Activated CD4-positive, alpha-beta T cell treated with anti-CD3 and anti-CD28 coated beads for 36 hours (primary cell): ENCODE measurements at regions of chr20 and their contacts with region 1.

Region 1: DNA sequence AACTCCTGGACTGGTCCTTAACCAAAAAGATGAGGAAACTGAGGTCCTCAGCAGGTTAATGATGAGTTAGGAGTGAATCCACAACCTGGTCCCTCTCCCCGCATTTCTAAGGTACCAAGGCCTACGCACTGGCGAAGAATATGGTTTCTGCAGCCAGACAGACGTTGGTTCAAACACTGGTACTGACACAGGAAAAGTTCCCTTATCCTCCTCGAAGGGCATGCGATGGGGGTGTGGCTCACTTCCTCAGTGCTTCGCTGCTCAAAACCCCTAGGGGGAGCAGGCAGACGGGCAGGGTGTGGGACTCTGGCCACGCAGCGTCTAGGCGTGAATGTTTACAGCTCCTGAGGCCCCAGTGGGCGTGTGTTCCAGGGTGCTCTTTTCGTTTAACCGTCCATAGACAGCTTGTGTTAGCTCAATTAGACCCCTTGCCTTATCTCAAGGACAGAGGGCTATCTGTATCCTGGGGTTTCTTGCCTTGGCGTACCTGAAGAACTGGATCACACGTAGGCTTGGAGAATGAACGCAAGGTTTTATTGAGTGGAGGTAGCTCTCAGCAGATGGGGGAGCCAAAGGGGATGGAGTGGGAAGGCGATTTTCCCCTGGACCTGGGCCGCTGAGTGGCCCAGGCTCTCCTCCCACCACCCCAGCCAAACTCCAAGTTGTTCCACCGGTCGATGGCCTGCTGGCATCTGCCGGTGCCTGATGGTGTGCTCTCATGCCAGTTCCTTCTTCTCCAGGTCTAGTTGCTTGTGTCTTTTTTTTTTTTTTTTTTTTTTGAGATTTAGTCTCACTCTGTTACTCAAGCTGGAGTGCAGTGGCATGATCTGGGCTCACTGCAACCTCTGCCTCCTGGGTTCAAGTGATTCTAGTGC is 31.8 kb upstream of the PTPN1 start:
- DNase-seq: peak; percentile 89
- ATAC-seq: peak; percentile 99
- H3K4me3 Mint-ChIP-seq: no peak overlapping the region
- H3K27ac Mint-ChIP-seq: peak overlapping the region; percentile 13
- H3K4me1 Mint-ChIP-seq: peaks cover 32% of the 10 kb centered on the region
- H3K27me3 Mint-ChIP-seq: no peaks in the 10 kb centered on the region

Region 2: GRCh38 chr20:48502850-48503815 is 1975.3 kb before region 1 on chr20:
- CTCF ChIA-PET with region 1: no interaction called
- POLR2A ChIA-PET with region 1: no interaction called
- intact Hi-C with region 1: no loop called
- DNase-seq: no peak
- ATAC-seq: no peak
- H3K4me3 Mint-ChIP-seq: no peak overlapping the region
- H3K27ac Mint-ChIP-seq: no peak overlapping the region
- H3K4me1 Mint-ChIP-seq: no peaks in the 10 kb centered on the region
- H3K27me3 Mint-ChIP-seq: no peaks in the 10 kb centered on the region

Region 3: GRCh38 chr20:50165684-50166554 is 312.5 kb before region 1 on chr20:
- CTCF ChIA-PET with region 1: no interaction called
- POLR2A ChIA-PET with region 1: no interaction called
- intact Hi-C with region 1: no loop called
- DNase-seq: peak; percentile 95
- ATAC-seq: peak; percentile 100
- H3K4me3 Mint-ChIP-seq: peak overlapping the region; percentile 58
- H3K27ac Mint-ChIP-seq: peak overlapping the region; percentile 72
- H3K4me1 Mint-ChIP-seq: peaks cover 13% of the 10 kb centered on the region
- H3K27me3 Mint-ChIP-seq: peaks cover 5% of the 10 kb centered on the region

Region 4: GRCh38 chr20:50455656-50456470 is 22.5 kb before region 1 on chr20:
- CTCF ChIA-PET with region 1: no interaction called
- POLR2A ChIA-PET with region 1: no interaction called
- intact Hi-C with region 1: no loop called
- DNase-seq: no peak
- ATAC-seq: no peak
- H3K4me3 Mint-ChIP-seq: no peak overlapping the region
- H3K27ac Mint-ChIP-seq: no peak overlapping the region
- H3K4me1 Mint-ChIP-seq: peaks cover 7% of the 10 kb centered on the region
- H3K27me3 Mint-ChIP-seq: peaks cover 20% of the 10 kb centered on the region

Region 5: GRCh38 chr20:50569864-50570836 is 91.8 kb after region 1 on chr20:
- CTCF ChIA-PET with region 1: interaction called, 28 read pairs
- POLR2A ChIA-PET with region 1: no interaction called
- intact Hi-C with region 1: loop called (anchors 1 to 2 kb)
- DNase-seq: peak; percentile 77
- ATAC-seq: peak; percentile 92
- H3K4me3 Mint-ChIP-seq: no peak overlapping the region
- H3K27ac Mint-ChIP-seq: peak overlapping the region; percentile 77
- H3K4me1 Mint-ChIP-seq: peaks cover 82% of the 10 kb centered on the region
- H3K27me3 Mint-ChIP-seq: no peaks in the 10 kb centered on the region

Region 6: DNA sequence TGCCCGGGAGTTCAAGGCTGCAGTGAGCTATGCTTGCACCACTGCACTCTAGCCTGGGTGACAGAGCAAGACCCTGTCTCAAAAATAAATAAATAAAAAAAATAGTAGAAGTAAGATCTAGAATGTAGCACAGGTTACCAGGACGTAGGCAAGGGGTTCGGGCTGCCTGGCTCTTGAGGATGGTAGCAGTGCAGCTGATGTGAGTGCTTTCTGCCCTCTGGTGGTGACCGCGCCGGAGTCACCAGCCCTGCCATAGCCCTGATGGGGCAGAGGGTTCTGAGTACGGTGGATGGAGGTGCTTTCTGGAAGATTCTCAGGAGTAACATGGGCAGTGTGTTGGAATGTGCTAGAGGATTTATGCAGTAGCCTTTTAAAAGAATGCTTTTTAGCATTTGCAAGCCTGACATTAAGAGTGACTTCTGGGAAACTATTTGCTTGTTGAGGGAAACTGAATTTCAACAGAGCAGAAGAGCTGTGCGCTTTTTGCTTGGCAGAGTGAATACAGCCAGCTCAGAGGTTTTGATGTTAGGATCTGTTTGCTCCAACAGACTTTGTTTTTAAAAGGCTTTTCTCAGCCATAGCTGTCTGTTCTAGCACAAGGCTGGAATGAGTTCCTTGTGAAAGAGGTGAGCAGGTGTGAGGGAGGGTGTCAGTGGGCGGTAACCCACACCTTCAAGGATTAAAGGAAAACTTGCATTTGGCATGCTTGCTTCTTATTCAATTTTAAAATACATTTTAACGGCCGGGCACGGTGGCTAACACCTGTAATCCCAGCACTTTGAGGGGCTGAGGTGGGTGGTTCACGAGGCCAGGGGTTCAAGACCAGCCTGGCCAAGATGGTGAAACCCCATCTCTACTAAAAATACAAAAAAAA is 97.7 kb after region 1 on chr20:
- CTCF ChIA-PET with region 1: interaction called, 28 read pairs
- POLR2A ChIA-PET with region 1: no interaction called
- intact Hi-C with region 1: loop called (anchors 1 kb)
- DNase-seq: peak; percentile 83
- ATAC-seq: peak; percentile 89
- H3K4me3 Mint-ChIP-seq: no peak overlapping the region
- H3K27ac Mint-ChIP-seq: peak overlapping the region; percentile 16
- H3K4me1 Mint-ChIP-seq: peaks cover 44% of the 10 kb centered on the region
- H3K27me3 Mint-ChIP-seq: no peaks in the 10 kb centered on the region

Region 7: DNA sequence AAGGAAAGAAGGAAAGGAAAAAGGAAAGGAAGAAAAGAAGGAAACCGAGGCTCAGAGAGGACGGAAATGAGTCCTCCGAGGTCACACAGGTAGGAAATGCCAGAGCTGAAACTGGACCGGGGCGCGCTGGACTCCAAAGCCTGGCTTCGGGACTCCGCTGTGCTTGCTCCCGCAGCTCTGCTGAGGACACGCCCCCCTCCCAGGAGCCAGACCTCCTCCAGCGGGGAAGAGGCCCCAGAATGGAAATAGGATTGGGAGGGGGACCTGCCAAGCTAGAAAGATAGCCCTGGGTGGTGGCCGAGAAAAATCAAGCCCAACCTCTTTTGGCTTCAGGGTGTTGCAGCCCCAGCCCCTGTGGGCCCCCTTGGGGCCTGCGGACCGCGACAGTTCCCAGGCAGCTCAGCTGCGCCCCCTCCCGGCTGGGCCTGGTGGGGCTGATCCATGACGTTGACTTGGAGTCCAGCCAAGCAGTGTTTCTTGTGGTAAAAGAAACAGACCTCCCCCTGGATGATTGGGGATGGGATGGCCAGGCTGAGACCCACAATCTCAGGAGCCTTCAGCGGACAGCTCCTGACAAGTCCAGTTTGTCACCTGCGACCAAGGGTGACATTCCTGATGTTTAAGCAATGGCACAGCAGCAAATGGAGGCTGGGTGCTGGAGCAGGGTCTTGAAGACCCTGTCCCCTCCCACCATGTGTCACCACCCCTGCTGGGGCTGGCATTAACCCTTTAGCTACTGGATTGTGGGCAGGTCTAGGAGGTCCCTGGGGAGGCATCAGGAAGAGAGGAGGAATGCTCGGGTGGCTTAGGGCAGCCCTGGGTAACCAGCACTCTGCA is 157.5 kb after region 1 on chr20:
- CTCF ChIA-PET with region 1: no interaction called
- POLR2A ChIA-PET with region 1: no interaction called
- intact Hi-C with region 1: loop called in 1 of 2 experiments (anchors 2 kb)
- DNase-seq: peak; percentile 84
- ATAC-seq: peak; percentile 79
- H3K4me3 Mint-ChIP-seq: no peak overlapping the region
- H3K27ac Mint-ChIP-seq: no peak overlapping the region
- H3K4me1 Mint-ChIP-seq: no peaks in the 10 kb centered on the region
- H3K27me3 Mint-ChIP-seq: peaks cover 3% of the 10 kb centered on the region